ENCODE measurements at regions of chr1 and their contacts with region 1.

Region 1: GRCh38 chr1:92299477-92300150 is 755 bp downstream of the RPAP2 start:
- DNase-seq: no peak
- CTCF ChIP-seq: no peak

Region 2: DNA sequence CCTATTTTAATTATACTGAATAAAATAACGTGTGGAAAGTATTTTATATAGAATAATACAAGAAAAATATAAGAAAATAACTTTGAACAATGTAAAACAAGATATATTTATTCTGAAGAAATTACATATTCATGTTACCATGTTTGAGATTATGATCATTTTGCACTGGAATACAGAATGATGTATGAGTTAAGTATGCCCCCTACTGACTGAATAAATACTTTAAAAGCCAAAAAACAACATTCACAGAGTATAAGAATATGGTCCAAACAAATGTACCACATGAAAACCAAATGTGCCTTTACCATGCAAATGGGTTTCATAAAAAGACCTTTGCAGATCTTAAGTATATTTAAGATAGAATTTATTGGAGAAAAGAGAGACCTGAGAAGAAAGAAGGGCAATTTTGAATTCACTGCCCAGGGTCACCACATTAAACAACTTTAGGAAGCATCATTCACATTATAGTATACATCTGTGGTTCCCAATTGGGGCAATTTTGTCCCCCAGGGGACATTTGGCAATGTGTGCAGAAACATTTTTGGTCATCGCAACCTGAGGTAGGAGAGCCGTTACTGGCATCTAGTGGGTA is 323.7 kb after region 1 on chr1:
- in situ Hi-C with region 1: loop called (anchors 10 kb)
- DNase-seq: peak; percentile 22
- CTCF ChIP-seq: peak; percentile 57